Common myeloid progenitor, CD34-positive (primary cell): ENCODE measurements at regions of chr5 and their contacts with region 1.

Region 1: GRCh38 chr5:472656-473553 is 29.9 kb downstream of the EXOC3 start:
- DNase-seq: peak; percentile 63 to 85 (median 81)
- H3K4me3 ChIP-seq: peak overlapping the region; percentile 65 to 81 (median 71)
- H3K27ac ChIP-seq: peak overlapping the region in 1 of 2 experiments; percentile 61
- H3K4me1 ChIP-seq: peaks cover 2 to 34% (median 30%) of the 10 kb centered on the region in 4 experiments
- H3K27me3 ChIP-seq: peaks cover 0 to 37% (median 5%) of the 10 kb centered on the region in 5 experiments

Region 2: GRCh38 chr5:373710-374602 is 98.9 kb before region 1 on chr5:
- CTCF ChIA-PET with region 1: no interaction called
- POLR2A ChIA-PET with region 1: no interaction called
- DNase-seq: peak; percentile 86 to 95 (median 91)
- H3K4me3 ChIP-seq: peak overlapping the region in 6 of 7 experiments; percentile 32 to 72 (median 59)
- H3K27ac ChIP-seq: peak overlapping the region in 1 of 2 experiments; percentile 74
- H3K4me1 ChIP-seq: peaks cover 0 to 93% (median 42%) of the 10 kb centered on the region in 4 experiments
- H3K27me3 ChIP-seq: peaks cover 0 to 5% (median 0%) of the 10 kb centered on the region in 5 experiments

Region 3: GRCh38 chr5:399296-400281 is 73.3 kb before region 1 on chr5:
- CTCF ChIA-PET with region 1: no interaction called
- POLR2A ChIA-PET with region 1: no interaction called
- DNase-seq: peak; percentile 96 to 97 (median 96)
- H3K4me3 ChIP-seq: peak overlapping the region in 4 of 7 experiments; percentile 14 to 45 (median 26)
- H3K27ac ChIP-seq: peak overlapping the region; percentile 46 to 78
- H3K4me1 ChIP-seq: peaks cover 0 to 56% (median 25%) of the 10 kb centered on the region in 4 experiments
- H3K27me3 ChIP-seq: no peaks in the 10 kb centered on the region

Region 4: GRCh38 chr5:485946-486491 is 13.1 kb after region 1 on chr5:
- CTCF ChIA-PET with region 1: interaction called, 13 read pairs
- POLR2A ChIA-PET with region 1: interaction called, 8 read pairs
- DNase-seq: peak; percentile 41 to 73 (median 61)
- H3K4me3 ChIP-seq: no peak overlapping the region
- H3K27ac ChIP-seq: no peak overlapping the region
- H3K4me1 ChIP-seq: peaks cover 2 to 43% (median 36%) of the 10 kb centered on the region in 4 experiments
- H3K27me3 ChIP-seq: no peaks in the 10 kb centered on the region